ENCODE measurements at regions of chr1 and their contacts with region 1.

Region 1: GRCh38 chr1:46527474-46528296 is 23.8 kb downstream of the KNCN start:
- DNase-seq: peak; percentile 78 to 97 (median 87)

Region 2: DNA sequence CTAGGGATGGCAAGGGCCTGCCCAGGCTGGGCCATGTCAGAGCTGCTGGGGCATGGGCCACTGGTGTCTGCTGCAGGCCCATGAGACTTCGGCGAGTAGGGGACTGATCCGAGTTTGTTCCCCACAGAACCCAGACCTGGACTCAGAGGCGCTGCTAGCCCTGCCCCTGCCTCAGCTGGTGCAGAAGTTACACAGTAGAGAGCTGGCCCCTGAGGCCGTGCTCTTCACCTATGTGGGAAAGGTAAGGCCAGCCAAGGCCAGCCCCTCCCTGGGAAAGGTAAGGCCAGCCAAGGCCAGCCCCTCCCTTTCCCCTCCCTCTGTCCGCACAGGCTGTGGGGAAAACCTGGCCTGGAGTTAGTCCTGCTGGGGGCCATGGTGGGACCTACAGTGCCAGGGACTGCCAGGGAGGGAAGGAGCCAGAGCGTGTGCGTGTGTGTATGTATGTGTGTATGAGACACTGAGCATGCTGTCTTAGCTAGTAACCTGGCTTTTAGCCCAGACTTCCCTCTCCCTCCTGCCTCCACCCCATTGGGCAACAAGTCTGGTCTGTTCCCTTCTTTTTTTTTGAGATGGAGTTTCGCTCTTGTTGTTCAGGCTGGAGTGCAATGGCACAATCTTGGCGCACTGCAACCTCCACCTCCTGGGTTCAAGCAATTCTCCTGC is 125.6 kb before region 1 on chr1:
- intact Hi-C with region 1: loop called (anchors 1 kb)
- DNase-seq: peak; percentile 62 to 98 (median 83)

Region 3: GRCh38 chr1:46442317-46443161 is 85.1 kb before region 1 on chr1:
- intact Hi-C with region 1: loop called (anchors 1 kb)
- DNase-seq: peak; percentile 27 to 93 (median 70)

Region 4: DNA sequence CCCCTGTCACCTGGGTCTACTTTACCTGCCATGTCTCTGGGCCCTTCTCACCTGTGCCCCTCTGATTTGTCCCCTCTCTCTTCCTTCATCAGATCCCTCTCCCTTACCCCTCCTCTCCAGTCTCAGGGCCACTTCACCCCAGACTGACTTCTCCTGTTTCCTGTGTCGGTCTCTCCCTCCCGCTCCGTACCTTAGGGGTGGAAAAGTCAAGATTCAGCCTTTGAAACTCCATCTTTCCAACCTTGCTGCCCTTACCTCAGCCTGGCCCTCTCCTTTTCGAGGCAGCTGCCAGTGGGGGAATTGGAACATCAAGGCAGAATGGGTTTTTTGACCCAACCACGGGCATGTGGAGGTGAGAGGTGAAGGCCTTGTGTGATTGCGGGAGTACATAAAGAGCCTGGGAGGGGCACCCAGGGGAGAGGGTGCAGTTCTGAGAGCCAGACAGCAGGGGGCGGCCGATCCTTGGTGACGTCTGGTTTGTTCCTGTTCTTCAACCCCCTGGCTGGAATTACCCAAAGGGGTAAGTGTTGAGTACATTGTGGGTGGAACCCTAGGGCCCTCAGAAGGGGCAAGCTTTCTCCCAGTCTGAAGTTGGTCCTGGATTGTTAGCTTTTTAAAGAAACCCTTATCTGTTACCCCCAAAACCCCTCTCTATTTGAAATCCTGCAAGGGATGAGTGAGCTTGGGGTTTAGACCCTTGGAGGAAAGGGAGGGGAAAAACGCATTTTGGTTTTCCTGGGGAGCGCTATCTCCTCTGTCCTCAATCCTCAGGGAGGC is 50.3 kb before region 1 on chr1:
- intact Hi-C with region 1: loop called (anchors 2 kb)
- DNase-seq: peak; percentile 55 to 96 (median 77)

Region 5: DNA sequence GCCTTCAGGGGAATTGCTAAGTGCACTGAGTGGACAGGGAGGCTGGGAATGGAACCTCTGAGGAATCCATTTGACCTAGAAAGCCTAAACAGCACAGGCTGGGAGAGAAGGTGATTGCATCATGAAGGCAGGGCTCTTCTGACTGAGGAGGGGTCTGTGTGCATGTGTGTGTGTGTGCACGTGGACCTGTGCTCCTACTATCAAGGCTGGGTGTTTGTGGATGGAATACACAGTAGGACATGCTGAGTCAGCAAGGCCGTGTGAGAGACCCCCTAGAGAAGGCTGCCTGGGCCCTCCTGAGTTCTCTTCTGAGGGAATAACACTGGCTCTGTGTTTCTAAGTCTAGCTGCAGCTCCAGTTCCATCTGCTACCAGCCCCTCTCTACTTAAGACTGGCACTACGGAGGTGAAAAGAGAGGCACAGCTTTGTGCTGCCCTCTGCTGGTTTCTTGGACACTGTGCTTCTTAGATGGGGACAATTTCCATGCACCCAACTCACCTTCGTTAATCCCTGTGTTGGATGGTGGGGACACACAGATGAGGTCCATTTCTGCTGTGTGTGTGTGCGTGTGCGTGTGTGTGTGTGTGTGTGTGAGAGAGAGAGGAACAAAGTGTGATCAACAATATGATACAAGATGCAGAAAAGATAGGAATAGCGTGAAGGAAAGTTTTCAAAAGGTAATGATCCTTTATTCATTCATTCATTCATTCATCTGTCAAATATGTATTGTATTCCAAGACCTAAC is 197.5 kb after region 1 on chr1:
- intact Hi-C with region 1: loop called (anchors 5 kb)
- DNase-seq: peak in 8 of 10 donors; percentile 37 to 94 (median 64)

Measured in posterior cingulate gyrus (tissue), 11 donors.